ENCODE measurements at regions of chr1 and their contacts with region 1.

Region 1: GRCh38 chr1:44721485-44722361 is 9.2 kb downstream of the RNU5D-1 start:
- DNase-seq: peak; percentile 61
- ATAC-seq: peak; percentile 80
- H3K4me3 Mint-ChIP-seq: peak overlapping the region; percentile 47
- H3K27ac Mint-ChIP-seq: peak overlapping the region; percentile 99
- H3K4me1 Mint-ChIP-seq: peaks cover 76% of the 10 kb centered on the region
- H3K27me3 Mint-ChIP-seq: no peaks in the 10 kb centered on the region
- CTCF ChIP-seq: no peak

Region 2: GRCh38 chr1:44652445-44653106 is 69.1 kb before region 1 on chr1:
- CTCF ChIA-PET with region 1: no interaction called
- POLR2A ChIA-PET with region 1: interaction called, 10 read pairs
- intact Hi-C with region 1: no loop called
- DNase-seq: peak; percentile 70
- ATAC-seq: peak; percentile 98
- H3K4me3 Mint-ChIP-seq: no peak overlapping the region
- H3K27ac Mint-ChIP-seq: peak overlapping the region; percentile 73
- H3K4me1 Mint-ChIP-seq: no peaks in the 10 kb centered on the region
- H3K27me3 Mint-ChIP-seq: no peaks in the 10 kb centered on the region
- CTCF ChIP-seq: peak; percentile 28

Region 3: GRCh38 chr1:44707959-44708831 is 13.5 kb before region 1 on chr1:
- CTCF ChIA-PET with region 1: interaction called, 54 read pairs
- POLR2A ChIA-PET with region 1: interaction called, 181 read pairs
- intact Hi-C with region 1: loop called (anchors 1 kb)
- DNase-seq: no peak
- ATAC-seq: peak; percentile 79
- H3K4me3 Mint-ChIP-seq: peak overlapping the region; percentile 62
- H3K27ac Mint-ChIP-seq: peak overlapping the region; percentile 55
- H3K4me1 Mint-ChIP-seq: peaks cover 34% of the 10 kb centered on the region
- H3K27me3 Mint-ChIP-seq: no peaks in the 10 kb centered on the region
- CTCF ChIP-seq: no peak

Region 4: GRCh38 chr1:44799770-44800584 is 78.3 kb after region 1 on chr1 and contains the start of gene PLK3:
- CTCF ChIA-PET with region 1: no interaction called
- POLR2A ChIA-PET with region 1: interaction called, 60 read pairs
- intact Hi-C with region 1: no loop called
- DNase-seq: peak; percentile 94
- ATAC-seq: peak; percentile 88
- H3K4me3 Mint-ChIP-seq: peak within 1 kb of the TSS; percentile 97
- H3K27ac Mint-ChIP-seq: peak within 1 kb of the TSS; percentile 100
- H3K4me1 Mint-ChIP-seq: peaks cover 33% of the 10 kb centered on the region
- H3K27me3 Mint-ChIP-seq: no peaks in the 10 kb centered on the region
- CTCF ChIP-seq: peak; percentile 30
- total RNA-seq, gene PLK3: 63.0 and 82.0 TPM in 2 replicates

Region 5: DNA sequence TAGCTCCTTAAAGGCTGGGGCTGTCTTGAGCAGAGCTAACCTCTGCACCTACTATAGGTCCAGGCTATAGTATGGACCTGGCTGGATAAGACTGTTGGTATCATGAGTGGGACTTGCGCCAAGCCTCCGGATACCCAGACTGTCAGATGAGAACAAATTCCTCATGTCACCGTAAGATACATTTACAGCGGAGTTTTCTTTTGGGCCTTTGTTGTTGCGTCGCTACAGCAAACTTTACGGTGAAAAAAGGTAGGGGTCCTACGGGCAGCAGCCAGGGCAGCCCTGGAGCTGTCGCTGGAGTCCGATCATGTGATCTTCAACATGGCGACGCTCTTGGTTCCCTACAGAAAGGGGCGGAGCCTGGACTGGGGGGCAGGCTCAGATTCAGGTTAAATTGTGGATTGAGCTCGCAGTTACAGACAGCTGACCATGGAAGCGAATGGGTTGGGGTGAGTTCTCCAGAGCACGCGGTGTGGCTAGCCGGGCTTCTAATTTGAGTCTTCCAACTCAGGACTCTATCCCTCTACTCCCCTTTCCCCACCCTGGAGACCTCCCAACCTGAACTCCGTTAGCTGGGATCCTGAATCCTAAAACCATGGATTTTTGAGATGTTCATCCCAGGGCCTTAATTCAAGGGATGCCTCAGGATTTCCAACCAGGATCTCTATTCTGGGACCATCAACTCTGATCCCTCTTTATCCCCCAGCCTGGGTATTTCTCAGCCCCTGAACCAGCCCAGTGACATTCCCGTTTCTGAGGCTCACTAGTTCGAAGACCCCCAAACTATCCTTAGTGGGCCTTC is 290.3 kb after region 1 on chr1 and contains the start of gene UROD:
- CTCF ChIA-PET with region 1: interaction called, 3 read pairs
- POLR2A ChIA-PET with region 1: interaction called, 53 read pairs
- intact Hi-C with region 1: no loop called
- DNase-seq: peak; percentile 69
- ATAC-seq: peak; percentile 84
- H3K4me3 Mint-ChIP-seq: peak within 1 kb of the TSS; percentile 83
- H3K27ac Mint-ChIP-seq: peak within 1 kb of the TSS; percentile 81
- H3K4me1 Mint-ChIP-seq: peaks cover 43% of the 10 kb centered on the region
- H3K27me3 Mint-ChIP-seq: no peaks in the 10 kb centered on the region
- CTCF ChIP-seq: no peak
- total RNA-seq, gene UROD: 60.3 and 64.9 TPM in 2 replicates

Region 6: GRCh38 chr1:45177452-45177851 is 455.7 kb after region 1 on chr1:
- CTCF ChIA-PET with region 1: no interaction called
- POLR2A ChIA-PET with region 1: no interaction called
- intact Hi-C with region 1: no loop called
- DNase-seq: no peak
- ATAC-seq: no peak
- H3K4me3 Mint-ChIP-seq: no peak overlapping the region
- H3K27ac Mint-ChIP-seq: no peak overlapping the region
- H3K4me1 Mint-ChIP-seq: no peaks in the 10 kb centered on the region
- H3K27me3 Mint-ChIP-seq: peaks cover 16% of the 10 kb centered on the region
- CTCF ChIP-seq: no peak

Region 7: GRCh38 chr1:45490626-45491486 is 769.1 kb after region 1 on chr1 and contains the start of gene TESK2:
- CTCF ChIA-PET with region 1: no interaction called
- POLR2A ChIA-PET with region 1: interaction called, 11 read pairs
- intact Hi-C with region 1: loop called (anchors 5 kb)
- DNase-seq: peak; percentile 95
- ATAC-seq: peak; percentile 89
- H3K4me3 Mint-ChIP-seq: no peak within 1 kb of the TSS
- H3K27ac Mint-ChIP-seq: no peak within 1 kb of the TSS
- H3K4me1 Mint-ChIP-seq: peaks cover 12% of the 10 kb centered on the region
- H3K27me3 Mint-ChIP-seq: no peaks in the 10 kb centered on the region
- CTCF ChIP-seq: no peak
- total RNA-seq, gene TESK2: 11.7 and 12.2 TPM in 2 replicates

Region 8: GRCh38 chr1:45583264-45583665 is 861.5 kb after region 1 on chr1:
- CTCF ChIA-PET with region 1: no interaction called
- POLR2A ChIA-PET with region 1: interaction called, 32 read pairs
- intact Hi-C with region 1: loop called (anchors 5 kb)
- DNase-seq: peak; percentile 84
- ATAC-seq: peak; percentile 79
- H3K4me3 Mint-ChIP-seq: peak overlapping the region; percentile 98
- H3K27ac Mint-ChIP-seq: peak overlapping the region; percentile 96
- H3K4me1 Mint-ChIP-seq: peaks cover 46% of the 10 kb centered on the region
- H3K27me3 Mint-ChIP-seq: no peaks in the 10 kb centered on the region
- CTCF ChIP-seq: no peak

Measured in activated B cell treated with CpG ODN at 0.5 μM for 24 hours (primary cell).